Dorsolateral prefrontal cortex (tissue), 120 donors: ENCODE measurements at regions of chr2 and their contacts with region 1.

Region 1: DNA sequence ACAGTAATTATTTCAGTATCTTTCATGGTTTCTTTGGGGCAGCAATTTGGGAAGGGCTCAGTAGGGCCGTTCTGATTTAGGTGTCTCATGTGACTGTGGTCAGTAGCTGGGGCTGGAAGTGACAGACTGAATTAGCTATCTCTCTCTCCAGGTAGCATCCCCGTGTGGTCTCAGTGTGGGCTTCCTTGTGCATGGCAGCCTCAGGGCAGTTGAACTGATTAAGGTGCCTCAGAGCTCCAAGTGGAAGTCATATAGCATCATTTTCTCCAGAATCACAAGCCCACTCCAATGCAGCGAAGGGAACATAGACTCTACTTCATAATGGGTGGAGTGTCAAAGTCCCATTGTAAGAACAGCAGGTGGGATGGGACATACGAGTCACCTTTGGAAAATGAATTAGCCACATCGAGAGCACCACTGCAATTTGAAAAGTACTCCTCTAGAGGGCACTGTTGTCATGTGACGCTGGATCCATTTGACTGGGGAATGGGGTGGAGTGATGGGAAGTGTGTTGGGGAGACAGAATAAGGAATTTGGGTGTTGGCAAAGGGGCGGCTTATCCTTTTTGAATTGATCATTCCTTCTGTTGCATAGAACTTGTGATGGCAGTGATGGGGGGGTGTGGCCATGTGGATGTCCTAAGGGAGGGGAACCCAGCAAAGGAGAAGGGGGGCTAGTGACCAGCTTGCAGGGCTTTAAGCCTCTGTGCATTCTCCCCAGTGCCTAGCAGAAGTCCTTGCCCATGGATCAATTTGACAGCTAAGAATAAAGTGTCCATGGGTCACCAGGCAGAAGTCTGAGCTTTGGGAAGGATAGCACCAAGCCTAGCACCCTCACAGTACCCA is 39.3 kb upstream of the FAM136A start:
- DNase-seq: peak in 2 of 10 donors; percentile 16 to 36
- H3K4me3 ChIP-seq: no peak overlapping the region
- H3K27ac ChIP-seq: no peak overlapping the region
- H3K27me3 ChIP-seq: peaks cover 0 to 12% (median 0%) of the 10 kb centered on the region in 45 donors
- CTCF ChIP-seq: peak; percentile 38 to 89 (median 80)

Region 2: GRCh38 chr2:70233926-70234325 is 107.2 kb before region 1 on chr2:
- intact Hi-C with region 1: no loop called
- DNase-seq: no peak
- H3K4me3 ChIP-seq: no peak overlapping the region
- H3K27ac ChIP-seq: peak overlapping the region in 1 of 59 donors; percentile 20
- H3K27me3 ChIP-seq: no peaks in the 10 kb centered on the region
- CTCF ChIP-seq: no peak

Region 3: DNA sequence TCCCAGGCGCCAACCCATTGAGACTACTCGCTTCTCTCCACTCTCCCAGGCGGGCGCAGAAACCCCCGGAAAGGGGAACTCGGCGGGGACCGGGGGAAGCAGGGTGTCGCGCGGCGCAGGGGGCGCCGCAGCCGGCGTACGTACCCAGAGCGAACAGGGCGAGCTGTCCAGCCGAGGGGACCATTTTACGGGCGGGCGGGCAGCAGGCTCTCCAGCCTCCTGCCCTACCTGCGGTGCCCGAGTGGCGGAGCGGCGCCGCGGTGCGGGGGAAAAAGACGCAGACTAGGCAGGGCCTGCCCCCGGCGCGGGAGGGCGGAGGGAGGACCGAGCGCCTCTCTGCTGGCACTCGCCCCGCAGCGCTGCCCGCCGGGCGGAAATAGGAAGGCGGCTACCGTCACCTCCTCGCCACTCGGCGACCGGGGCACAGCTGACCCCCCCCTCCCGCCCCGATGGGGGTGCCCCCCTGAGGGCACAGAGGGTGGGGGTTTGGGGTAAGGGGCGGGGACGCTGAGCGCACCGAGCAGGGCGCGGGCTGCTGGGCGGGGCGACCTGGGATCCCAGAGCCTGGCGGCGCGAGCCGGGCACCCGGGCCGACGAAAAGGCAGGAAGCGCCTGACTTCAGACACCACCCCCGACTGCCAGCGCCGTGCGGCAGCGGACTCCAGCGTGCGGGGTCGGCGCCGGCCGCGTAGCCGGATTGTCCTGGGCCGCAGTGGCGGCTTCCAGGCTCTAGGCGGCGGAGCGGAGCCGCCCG is 212.6 kb after region 1 on chr2 and contains the start of gene TGFA:
- intact Hi-C with region 1: loop called in 1 of 2 experiments (anchors 10 kb)
- DNase-seq: peak; percentile 54 to 87 (median 75)
- H3K4me3 ChIP-seq: peak within 1 kb of the TSS; percentile 58 to 85 (median 72)
- H3K27ac ChIP-seq: peak within 1 kb of the TSS; percentile 16 to 99 (median 91)
- H3K27me3 ChIP-seq: peaks cover 0 to 52% (median 11%) of the 10 kb centered on the region in 45 donors
- CTCF ChIP-seq: peak in 54 of 56 donors; percentile 27 to 84 (median 68)
- total RNA-seq, gene TGFA: 4.2 to 47.1 (median 12.5) TPM

Region 4: DNA sequence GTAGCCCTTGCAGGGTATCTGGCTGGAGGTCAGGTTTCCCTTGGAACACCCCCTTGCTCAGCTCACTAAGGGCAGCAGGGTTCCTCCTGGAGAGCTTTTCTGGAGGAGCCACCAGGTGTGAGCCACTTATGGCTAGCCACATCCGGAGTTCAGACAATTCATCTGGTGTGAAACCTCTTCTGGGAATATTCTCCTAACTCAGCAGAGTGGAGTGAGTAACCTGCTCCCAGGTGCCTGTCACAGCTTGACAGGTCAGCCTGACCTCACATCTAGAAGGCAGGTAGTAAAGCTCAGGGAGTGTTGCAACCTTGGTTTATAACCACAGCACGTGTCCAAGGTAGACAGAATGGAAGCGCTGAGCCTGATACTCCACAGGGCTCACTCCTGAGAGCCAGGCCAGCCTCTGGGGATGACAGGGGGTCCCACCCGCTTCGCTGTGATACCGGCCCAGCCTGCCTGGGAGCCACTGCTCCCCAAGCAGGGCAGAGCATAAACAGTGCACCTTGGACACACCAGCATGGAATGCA is 275.1 kb after region 1 on chr2:
- intact Hi-C with region 1: loop called (anchors 1 to 5 kb)
- DNase-seq: no peak
- H3K4me3 ChIP-seq: no peak overlapping the region
- H3K27ac ChIP-seq: no peak overlapping the region
- H3K27me3 ChIP-seq: peaks cover 0 to 3% (median 0%) of the 10 kb centered on the region in 45 donors
- CTCF ChIP-seq: no peak

Region 5: GRCh38 chr2:70647873-70648481 is 306.8 kb after region 1 on chr2:
- intact Hi-C with region 1: loop called in 1 of 2 experiments (anchors 10 kb)
- DNase-seq: peak in 9 of 10 donors; percentile 59 to 79 (median 67)
- H3K4me3 ChIP-seq: no peak overlapping the region
- H3K27ac ChIP-seq: no peak overlapping the region
- H3K27me3 ChIP-seq: no peaks in the 10 kb centered on the region
- CTCF ChIP-seq: peak; percentile 76 to 99 (median 91)

Region 6: GRCh38 chr2:70779911-70780545 is 438.9 kb after region 1 on chr2:
- intact Hi-C with region 1: loop called in 1 of 2 experiments (anchors 10 kb)
- DNase-seq: no peak
- H3K4me3 ChIP-seq: no peak overlapping the region
- H3K27ac ChIP-seq: no peak overlapping the region
- H3K27me3 ChIP-seq: peaks cover 0 to 13% (median 0%) of the 10 kb centered on the region in 45 donors
- CTCF ChIP-seq: no peak